Psoas muscle (tissue), 8 donors: ENCODE measurements at regions of chr4 and their contacts with region 1.

Region 1: DNA sequence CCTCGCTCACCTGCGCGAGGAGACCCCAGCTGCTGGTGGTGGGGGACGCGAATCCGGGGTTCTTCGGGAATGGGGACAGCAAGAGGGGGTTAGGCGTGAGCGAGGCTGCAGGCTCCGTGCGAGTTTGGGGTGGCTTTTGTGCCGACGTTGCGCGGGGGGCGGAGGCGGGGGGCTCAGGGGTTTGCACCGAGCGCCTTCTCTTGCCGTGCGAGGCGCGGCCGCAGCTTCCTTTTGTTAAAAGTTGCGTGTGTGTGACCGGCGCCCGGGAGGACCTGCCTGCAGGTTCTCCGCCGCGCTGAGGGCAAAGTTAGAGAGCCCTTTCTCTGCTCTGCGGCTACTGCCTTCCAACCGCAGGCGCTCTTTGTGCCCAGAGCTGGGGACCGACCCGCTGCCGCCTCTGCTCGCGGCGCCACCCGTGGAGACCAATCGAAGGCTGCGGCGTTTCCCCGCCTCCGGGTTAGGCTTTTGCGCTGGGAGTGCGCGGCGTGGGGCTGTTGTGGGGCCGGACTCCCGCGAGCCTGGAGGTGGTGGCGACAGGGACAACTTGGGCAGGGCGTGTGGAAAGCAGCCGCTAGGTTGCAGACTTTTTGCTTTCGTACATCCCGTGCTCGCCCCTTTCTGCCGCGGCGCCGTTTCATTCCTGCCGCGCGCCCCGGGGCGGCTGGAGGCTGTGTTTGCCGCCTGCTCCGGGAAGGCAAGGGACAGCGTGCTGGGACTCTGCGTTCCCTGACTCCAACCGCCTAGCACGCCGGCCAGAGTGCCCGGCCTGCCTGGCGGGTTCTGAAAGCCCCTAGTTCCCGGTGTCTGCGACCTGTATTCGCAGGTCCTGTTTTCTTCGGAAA is 716 bp downstream of the KIT start:
- DNase-seq: peak; percentile 52 to 56
- ATAC-seq: peak; percentile 40 to 77 (median 64)
- H3K4me3 ChIP-seq: peak overlapping the region; percentile 69
- H3K27ac ChIP-seq: no peak overlapping the region
- H3K4me1 ChIP-seq: peaks cover 10% of the 10 kb centered on the region
- H3K27me3 ChIP-seq: peaks cover 0 to 75% (median 2%) of the 10 kb centered on the region in 3 donors
- CTCF ChIP-seq: peak; percentile 18

Region 2: GRCh38 chr4:54961357-54961975 is 303.0 kb after region 1 on chr4:
- intact Hi-C with region 1: loop called in 1 of 2 experiments (anchors 10 kb)
- DNase-seq: no peak
- ATAC-seq: no peak
- H3K4me3 ChIP-seq: no peak overlapping the region
- H3K27ac ChIP-seq: no peak overlapping the region
- H3K4me1 ChIP-seq: no peaks in the 10 kb centered on the region
- H3K27me3 ChIP-seq: no peaks in the 10 kb centered on the region
- CTCF ChIP-seq: peak; percentile 45